Ascending aorta (tissue), 2 donors: ENCODE measurements at regions of chrX and their contacts with region 1.

Region 1: DNA sequence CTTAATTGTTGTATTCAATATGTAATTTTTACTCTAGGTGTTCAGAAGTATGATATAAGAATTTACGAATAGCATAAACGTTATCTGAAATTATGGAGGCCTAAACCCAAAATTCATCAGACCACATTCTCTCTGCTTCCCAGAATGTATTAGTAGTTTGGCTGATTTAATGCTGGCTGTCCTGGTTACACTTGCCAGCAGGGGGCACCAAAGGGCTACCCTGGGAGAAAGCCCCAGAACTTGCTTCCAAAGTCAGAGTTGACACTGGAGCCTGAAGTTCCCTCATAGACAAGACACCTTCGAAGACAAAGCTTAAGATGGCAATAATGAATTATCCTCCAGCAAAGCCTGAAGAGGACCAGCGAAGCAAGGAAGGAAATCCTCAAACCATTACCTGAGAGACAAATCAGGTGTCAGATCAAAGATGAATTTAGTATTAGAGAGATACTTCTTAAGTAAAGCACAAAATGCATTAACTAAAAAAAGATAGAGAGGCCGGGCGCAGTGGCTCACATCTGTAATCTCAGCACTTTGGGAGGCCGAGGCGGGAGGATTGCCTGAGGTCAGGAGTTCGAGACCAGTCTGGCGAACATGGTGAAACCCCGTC is 11.3 kb upstream of the ANOS1 start:
- DNase-seq: no peak
- H3K4me3 ChIP-seq: no peak overlapping the region
- H3K27ac ChIP-seq: no peak overlapping the region
- H3K4me1 ChIP-seq: no peaks in the 10 kb centered on the region
- H3K27me3 ChIP-seq: peaks cover 4% of the 10 kb centered on the region
- CTCF ChIP-seq: peak; percentile 30 to 65 (median 64)

Region 2: GRCh38 chrX:8179656-8180055 is 563.6 kb before region 1 on chrX:
- intact Hi-C with region 1: loop called (anchors 5 kb)
- DNase-seq: no peak
- H3K4me3 ChIP-seq: no peak overlapping the region
- H3K27ac ChIP-seq: no peak overlapping the region
- H3K4me1 ChIP-seq: no peaks in the 10 kb centered on the region
- H3K27me3 ChIP-seq: no peaks in the 10 kb centered on the region
- CTCF ChIP-seq: peak in 1 of 3 experiments; percentile 35

Region 3: GRCh38 chrX:8845060-8845459 is 101.8 kb after region 1 on chrX:
- intact Hi-C with region 1: no loop called
- DNase-seq: no peak
- H3K4me3 ChIP-seq: no peak overlapping the region
- H3K27ac ChIP-seq: no peak overlapping the region
- H3K4me1 ChIP-seq: no peaks in the 10 kb centered on the region
- H3K27me3 ChIP-seq: no peaks in the 10 kb centered on the region
- CTCF ChIP-seq: no peak